Prostate gland (tissue), 2 donors: ENCODE measurements at regions of chrX and their contacts with region 1.

Region 1: DNA sequence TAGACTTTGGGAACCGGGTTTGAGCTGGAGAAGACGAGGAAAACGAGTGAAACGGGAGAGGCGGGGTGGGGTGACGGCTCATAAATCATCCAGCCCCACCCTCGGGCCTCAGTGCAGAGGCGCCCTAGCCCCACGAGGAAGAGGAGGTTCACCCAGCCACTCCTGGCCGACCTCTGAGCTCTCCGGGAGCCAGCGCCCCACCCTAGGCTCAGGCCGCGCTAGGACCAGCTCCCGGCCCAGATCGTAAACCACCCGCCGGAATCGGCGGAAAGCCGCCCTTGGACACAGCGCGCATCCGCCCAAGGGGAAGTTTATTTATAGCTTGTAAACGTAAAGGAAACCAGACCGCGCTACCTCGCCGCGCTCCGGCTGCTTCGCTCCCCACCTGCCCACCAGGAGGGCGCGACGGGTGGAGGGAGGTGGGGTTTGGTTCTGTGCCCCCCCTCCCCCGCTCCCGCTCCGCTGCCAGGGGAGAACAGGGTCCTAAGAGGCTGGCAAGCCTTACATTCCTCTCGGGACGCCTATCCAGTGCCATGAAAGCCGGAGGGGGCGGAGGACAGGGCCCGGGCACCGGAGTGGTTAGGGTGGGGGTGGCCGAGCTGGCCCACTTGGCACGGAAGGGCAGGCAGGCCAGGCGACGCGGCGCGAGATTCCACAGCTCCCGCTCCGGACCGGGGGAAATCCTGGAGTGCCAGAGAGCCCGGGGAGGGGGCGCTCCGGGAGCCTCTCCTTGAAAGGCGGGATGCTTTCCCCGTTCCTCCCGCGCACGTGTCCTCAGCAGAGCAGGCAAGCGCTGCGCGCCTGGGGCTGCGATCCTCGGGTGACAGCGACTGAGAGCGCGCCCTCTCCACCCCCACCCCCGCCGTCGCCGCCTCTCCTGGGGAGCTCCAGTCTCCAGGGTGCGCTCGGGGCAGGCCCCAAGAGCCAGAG is 84.2 kb downstream of the BCOR start:
- DNase-seq: peak; percentile 70
- H3K4me3 ChIP-seq: peak overlapping the region; percentile 40 to 45
- H3K27ac ChIP-seq: peak overlapping the region; percentile 87 to 90
- H3K4me1 ChIP-seq: no peaks in the 10 kb centered on the region
- H3K27me3 ChIP-seq: no peaks in the 10 kb centered on the region
- CTCF ChIP-seq: no peak
- POLR2A ChIP-seq: no peak

Region 2: DNA sequence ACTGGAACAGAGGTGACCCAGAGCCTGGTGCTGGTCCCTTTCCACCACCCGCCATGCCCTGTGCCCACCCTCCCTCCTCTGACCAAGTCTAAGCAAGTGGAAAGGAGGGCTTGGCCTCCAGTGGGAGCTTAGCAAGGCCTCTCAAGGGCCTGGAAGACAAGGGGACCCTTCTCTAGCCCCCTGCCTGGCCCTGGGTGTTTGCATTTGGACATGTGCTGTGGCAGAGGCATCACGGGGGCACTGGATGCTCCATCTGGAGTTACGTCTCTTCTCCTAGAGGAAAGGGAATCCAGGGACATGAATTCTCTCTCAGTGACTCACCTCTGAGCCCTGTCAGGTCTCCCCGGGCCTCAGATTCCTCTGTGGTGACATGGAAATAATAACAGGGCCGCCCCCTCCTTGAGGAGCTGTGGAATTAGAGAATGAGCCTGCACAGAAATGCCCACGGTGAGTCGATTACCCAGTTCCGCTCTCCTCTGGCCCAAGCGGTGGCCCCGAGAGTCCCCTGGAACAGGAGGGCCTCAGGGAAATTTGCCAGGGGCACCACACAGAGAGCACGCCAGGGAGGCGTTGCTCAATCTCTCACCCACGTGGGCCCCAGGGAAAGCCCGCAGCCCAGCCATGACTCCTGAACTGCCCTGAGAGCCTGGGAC is 105.4 kb before region 1 on chrX:
- intact Hi-C with region 1: loop called (anchors 2 kb)
- DNase-seq: peak; percentile 52
- H3K4me3 ChIP-seq: no peak overlapping the region
- H3K27ac ChIP-seq: no peak overlapping the region
- H3K4me1 ChIP-seq: no peaks in the 10 kb centered on the region
- H3K27me3 ChIP-seq: no peaks in the 10 kb centered on the region
- CTCF ChIP-seq: no peak
- POLR2A ChIP-seq: no peak

Region 3: DNA sequence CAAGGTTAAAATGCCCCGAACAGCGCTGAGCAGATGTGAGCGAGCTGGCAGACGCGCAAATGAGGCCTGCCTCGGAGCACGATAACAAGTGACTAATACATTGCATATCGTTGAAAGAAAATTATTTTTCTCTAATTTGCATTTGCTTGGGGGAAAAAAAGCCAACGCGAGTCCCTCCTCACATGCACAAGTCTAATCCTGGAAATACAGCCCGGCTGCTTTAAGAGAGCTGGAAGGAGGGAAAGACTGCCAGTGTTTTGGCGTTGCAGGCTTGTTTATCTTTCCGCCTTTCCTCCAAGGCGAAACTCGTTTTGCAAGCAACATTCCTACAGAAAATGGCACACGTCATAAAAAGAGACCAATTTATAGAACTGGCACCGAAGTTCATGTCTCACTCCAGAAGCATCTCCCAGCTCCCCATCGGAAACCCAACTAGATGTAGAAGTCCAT is 71.6 kb after region 1 on chrX:
- intact Hi-C with region 1: loop called (anchors 5 kb)
- DNase-seq: peak; percentile 73
- H3K4me3 ChIP-seq: peak overlapping the region in 1 of 2 donors; percentile 18
- H3K27ac ChIP-seq: peak overlapping the region; percentile 68 to 83
- H3K4me1 ChIP-seq: peaks cover 3% of the 10 kb centered on the region
- H3K27me3 ChIP-seq: no peaks in the 10 kb centered on the region
- CTCF ChIP-seq: no peak
- POLR2A ChIP-seq: no peak

Region 4: DNA sequence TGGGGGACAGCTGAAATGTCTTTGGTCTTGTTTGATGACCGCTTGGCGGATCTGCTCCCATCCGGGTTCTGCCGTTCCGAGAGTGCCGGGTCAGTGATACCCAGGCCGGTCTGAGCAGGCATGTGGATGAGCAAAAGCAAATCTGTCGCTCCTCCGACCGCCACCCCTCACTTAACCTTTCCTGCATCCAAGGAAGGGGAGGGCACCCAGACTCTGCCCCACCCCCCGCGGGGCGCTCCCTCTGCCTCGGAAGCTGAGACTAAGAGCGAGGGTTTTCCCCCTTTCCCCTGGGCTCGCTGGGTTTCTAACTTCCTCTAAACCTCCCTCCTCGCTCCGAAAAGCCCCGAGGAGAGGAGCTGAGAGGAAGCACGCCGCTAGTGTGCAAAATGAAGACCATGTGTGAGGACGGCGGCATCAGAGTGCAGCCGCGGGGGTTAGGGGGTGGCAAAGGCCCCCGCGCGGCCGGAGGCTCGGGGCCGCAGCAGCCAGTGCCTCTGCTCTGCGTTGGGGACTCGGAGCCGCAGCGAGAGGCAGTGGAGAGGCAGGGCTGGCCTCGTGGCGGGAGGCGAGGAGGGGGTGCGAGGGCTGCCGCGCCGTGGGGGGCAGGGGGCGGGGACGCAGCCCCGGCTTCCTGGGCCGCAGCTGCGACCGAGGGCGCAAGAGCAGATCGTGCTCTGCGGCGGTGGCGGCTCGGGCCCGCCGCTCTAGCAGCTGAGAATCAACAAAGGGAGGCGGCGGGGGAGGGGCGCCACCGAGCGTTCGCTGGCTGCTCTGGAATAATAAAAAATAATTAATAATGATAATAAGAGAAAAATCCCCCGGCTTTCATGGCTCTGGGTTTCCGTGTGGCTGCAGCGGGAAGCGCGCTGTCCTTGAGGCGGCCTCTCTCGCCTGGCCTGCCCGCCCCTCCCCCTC is 140.1 kb after region 1 on chrX:
- intact Hi-C with region 1: loop called (anchors 10 kb)
- DNase-seq: no peak
- H3K4me3 ChIP-seq: peak overlapping the region; percentile 29 to 36
- H3K27ac ChIP-seq: peak overlapping the region; percentile 69 to 80
- H3K4me1 ChIP-seq: peaks cover 3% of the 10 kb centered on the region
- H3K27me3 ChIP-seq: no peaks in the 10 kb centered on the region
- CTCF ChIP-seq: peak in 1 of 4 experiments; percentile 19
- POLR2A ChIP-seq: no peak